WTC11 (cell line): ENCODE measurements at regions of chr4 and their contacts with region 1.

Region 1: DNA sequence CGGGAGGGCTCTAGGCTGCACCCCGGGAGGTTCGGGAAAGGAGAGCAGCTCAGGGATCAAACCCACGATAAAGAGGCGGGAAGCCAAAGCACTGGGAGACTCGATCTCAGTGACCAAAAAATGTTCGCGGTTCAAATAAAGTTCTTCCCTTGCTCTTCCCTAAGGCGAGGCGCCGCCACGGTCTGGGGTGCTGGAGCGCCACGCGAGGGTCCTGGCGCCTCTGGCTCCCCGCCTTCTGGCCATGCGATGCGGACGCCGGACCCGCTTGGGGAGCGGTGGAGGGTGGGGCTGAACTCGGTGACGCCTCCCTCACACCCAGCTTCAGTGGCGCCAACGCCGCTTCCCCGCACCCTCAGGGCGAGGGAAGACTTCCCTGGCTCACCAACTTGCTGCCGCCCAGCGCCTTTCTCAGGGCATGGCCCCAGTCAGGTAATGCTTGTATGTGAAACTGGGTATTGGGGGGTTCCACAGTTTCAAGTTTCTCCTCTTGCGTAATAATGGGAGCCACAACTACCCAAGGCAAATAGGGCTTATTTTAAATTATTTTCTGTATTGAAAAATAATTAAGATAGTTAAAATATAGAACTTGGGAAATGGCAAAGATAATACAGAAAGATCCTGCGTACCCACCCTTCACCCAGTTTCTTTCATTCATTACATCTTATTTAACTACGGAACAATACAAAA is at the start of gene QRFPR:
- DNase-seq: peak; percentile 55
- ATAC-seq: peak; percentile 84
- H3K4me3 Mint-ChIP-seq: peak within 1 kb of the TSS; percentile 73
- H3K27ac Mint-ChIP-seq: no peak within 1 kb of the TSS
- H3K4me1 Mint-ChIP-seq: peaks cover 9% of the 10 kb centered on the region
- H3K27me3 Mint-ChIP-seq: peaks cover 58% of the 10 kb centered on the region
- CTCF ChIP-seq: no peak
- total RNA-seq, gene QRFPR: 0.41 to 0.73 TPM (median 0.68 TPM) in 3 replicates

Region 2: GRCh38 chr4:121358473-121358872 is 22.4 kb before region 1 on chr4:
- CTCF ChIA-PET with region 1: no interaction called
- POLR2A ChIA-PET with region 1: no interaction called
- DNase-seq: no peak
- ATAC-seq: no peak
- H3K4me3 Mint-ChIP-seq: no peak overlapping the region
- H3K27ac Mint-ChIP-seq: no peak overlapping the region
- H3K4me1 Mint-ChIP-seq: no peaks in the 10 kb centered on the region
- H3K27me3 Mint-ChIP-seq: peaks cover 6% of the 10 kb centered on the region
- CTCF ChIP-seq: no peak

Region 3: DNA sequence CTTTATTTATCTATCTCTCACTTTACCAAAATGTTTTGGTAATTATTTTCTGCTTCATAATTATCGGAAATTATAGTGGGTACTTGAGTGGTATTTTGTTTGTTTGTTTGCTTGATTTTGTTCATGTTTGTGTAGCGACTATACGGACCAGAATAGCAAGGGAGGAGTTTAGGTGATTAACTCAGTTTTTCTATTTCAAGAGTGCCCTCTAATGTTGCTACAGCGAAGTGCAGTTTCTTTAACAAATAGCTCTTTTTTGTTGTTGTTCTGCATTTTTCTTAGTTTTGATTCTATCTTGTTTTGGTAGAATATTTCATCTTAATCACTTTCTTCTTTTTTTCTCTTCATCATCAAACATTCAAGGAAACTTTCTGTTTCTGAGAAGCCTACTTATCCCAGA is 40.7 kb after region 1 on chr4:
- CTCF ChIA-PET with region 1: interaction called, 14 read pairs
- POLR2A ChIA-PET with region 1: no interaction called
- DNase-seq: no peak
- ATAC-seq: peak; percentile 36; the same call in 1 of the 2 replicates
- H3K4me3 Mint-ChIP-seq: no peak overlapping the region
- H3K27ac Mint-ChIP-seq: no peak overlapping the region
- H3K4me1 Mint-ChIP-seq: no peaks in the 10 kb centered on the region
- H3K27me3 Mint-ChIP-seq: no peaks in the 10 kb centered on the region
- CTCF ChIP-seq: no peak

Region 4: DNA sequence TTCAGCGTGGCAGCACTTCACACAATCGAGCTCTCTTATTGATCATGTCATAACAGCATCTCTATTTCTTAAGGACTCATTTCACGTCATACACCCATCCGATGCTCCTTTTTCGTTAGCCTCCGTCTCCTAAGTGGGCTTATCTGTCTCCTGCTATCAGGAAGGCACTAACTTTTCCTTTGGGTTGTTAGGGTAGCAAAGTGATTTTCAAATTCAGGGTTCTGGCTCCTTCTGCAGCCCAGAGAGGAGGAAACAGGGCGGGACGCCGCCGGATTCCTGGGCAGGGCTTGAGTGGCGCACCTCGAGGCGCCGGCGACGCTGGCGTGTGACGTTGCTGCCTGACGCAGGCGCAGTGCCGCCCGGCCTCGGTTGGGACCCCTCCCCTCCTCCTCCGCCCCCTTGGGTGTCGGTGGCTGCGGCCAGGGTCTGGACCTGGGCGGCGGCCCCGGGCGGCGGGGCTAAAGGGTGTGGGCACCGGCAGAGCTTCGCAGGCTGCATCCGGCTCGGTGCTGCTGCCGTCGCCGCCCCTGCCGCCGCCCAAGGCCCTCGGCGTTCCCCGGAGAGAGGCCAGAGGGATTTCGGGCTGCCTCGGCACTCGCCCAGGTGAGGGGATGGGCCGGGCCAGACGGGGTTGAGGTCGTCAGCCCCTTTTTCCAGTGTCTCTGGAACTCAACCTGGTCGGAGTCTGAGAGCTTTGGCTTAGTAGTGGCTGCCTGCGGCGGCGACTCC is 771.2 kb after region 1 on chr4 and contains the start of gene BLTP1:
- CTCF ChIA-PET with region 1: no interaction called
- POLR2A ChIA-PET with region 1: interaction called, 10 read pairs
- DNase-seq: peak; percentile 90
- ATAC-seq: peak; percentile 95
- H3K4me3 Mint-ChIP-seq: peak within 1 kb of the TSS; percentile 97
- H3K27ac Mint-ChIP-seq: peak within 1 kb of the TSS; percentile 96
- H3K4me1 Mint-ChIP-seq: peaks cover 14% of the 10 kb centered on the region
- H3K27me3 Mint-ChIP-seq: no peaks in the 10 kb centered on the region
- CTCF ChIP-seq: no peak
- total RNA-seq, gene BLTP1: 29.1 to 32.1 TPM (median 30.3 TPM) in 3 replicates